ENCODE measurements at regions of chr15 and their contacts with region 1.

Region 1: DNA sequence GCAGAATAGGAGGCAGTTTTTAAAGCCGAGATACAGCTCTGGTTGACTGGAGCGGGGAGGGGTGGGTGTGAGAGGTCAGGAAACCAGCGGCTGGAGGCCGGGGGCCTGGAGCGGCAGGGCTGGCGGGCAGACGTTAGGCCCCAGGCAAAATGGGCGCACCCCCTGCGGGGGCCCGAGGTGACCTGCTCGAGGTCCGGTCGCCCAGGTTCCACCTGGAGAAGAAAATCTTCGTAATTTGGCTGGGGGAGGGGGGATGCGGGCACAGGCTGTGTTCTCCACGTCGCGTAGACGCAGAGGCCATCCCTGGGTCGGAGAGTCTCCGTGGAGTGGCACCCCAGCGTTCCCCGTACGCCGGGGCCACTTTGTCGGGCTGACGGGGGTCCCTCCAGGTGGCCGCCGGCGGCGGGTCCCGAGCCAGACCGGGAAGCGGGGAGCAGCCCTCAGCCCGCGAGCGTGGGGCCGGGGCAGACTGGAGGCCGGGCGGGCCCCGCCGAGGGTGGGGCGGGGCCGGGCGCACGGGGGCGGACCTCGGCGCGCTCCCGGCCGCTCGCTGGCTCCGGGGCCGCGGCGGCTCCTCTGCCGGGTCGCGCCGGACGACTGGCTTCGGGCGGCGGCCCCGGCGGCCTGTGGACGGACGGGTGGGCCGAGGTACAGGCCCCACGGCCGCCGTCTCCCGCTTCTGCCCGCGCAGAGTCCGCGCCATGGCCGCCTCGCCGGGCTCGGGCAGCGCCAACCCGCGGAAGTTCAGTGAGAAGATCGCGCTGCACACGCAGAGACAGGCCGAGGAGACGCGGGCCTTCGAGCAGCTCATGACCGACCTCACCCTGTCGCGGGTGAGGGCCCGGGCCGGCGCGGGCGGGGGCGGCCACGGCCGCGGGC is at the start of gene CRTC3:
- H3K4me3 Mint-ChIP-seq: peak within 1 kb of the TSS; percentile 99
- H3K27ac Mint-ChIP-seq: peak within 1 kb of the TSS; percentile 91
- H3K4me1 Mint-ChIP-seq: peaks cover 43% of the 10 kb centered on the region
- H3K27me3 Mint-ChIP-seq: peaks cover 4% of the 10 kb centered on the region

Region 2: DNA sequence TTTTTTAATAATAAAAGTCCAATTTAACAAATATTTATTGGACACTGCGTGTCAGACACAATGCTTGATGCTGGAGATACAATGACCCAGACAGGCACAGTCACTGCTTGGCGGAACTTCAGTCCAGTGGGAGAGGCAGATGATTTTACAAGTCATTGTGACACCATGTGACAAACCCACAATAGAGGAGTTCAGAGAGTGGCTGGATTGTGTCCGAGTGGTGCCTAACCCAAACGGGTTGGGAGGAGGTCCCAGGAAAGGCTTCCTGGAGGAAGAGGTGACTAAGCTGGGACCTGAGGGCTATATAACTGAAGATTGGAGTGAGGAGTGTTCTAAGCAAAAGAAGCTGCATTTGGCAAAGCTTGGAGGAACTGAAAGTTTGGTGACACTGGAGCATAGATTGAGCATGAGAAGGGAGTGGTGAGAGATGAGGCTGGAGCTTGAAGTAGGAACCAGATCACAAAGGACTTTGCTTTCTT is 41.5 kb after region 1 on chr15:
- intact Hi-C with region 1: loop called (anchors 5 kb)
- H3K4me3 Mint-ChIP-seq: peak overlapping the region; percentile 74
- H3K27ac Mint-ChIP-seq: peak overlapping the region; percentile 93
- H3K4me1 Mint-ChIP-seq: peaks cover 61% of the 10 kb centered on the region
- H3K27me3 Mint-ChIP-seq: no peaks in the 10 kb centered on the region